Prostate gland (tissue), 2 donors: ENCODE measurements at regions of chr6 and their contacts with region 1.

Region 1: DNA sequence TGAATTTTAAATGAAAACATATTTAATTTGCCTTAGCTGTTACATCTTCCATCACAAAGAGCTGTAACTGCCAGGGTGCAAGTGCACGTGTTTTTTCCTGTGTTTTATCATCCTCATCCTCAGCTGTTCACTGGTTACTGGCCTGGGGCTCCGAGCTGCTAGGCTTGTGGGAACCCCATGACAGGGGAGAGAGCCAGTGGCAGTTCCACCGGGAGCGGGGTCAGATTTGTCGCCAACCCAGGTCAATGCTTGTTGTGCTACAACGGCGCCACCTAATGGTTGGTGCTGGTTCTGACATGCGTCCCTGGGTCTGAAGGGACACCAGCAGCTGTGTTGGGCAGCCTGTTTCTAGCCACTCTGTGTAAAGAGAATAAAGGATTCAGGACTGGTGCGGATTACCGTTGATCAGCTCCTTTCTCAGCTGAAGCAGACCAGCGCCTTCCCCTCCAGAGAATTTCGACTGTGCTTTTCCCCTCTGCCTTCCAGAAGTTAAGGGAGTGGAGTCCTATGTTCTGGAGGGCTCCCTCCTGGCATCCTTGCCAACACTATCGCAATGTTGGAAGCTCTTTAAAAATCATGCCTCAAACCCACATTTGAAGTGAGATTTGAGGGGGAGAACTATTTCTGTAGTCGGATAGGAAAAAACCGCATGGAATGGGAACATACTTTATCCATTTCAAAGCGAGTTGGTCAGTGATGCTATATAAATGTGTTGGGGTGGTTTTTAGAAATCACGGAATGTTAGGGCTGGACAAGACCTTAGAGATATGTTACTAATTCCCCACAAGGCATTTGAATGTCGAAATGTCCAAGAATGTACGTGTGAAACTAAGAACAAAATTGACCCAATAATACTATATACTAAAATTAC is 32.1 kb downstream of the SUMO4 start:
- DNase-seq: peak; percentile 87
- H3K4me3 ChIP-seq: no peak overlapping the region
- H3K27ac ChIP-seq: no peak overlapping the region
- H3K4me1 ChIP-seq: no peaks in the 10 kb centered on the region
- H3K27me3 ChIP-seq: no peaks in the 10 kb centered on the region
- CTCF ChIP-seq: peak; percentile 89 to 95 (median 94)
- POLR2A ChIP-seq: no peak

Region 2: GRCh38 chr6:149316798-149317655 is 115.1 kb before region 1 on chr6:
- intact Hi-C with region 1: loop called (anchors 5 kb)
- DNase-seq: peak; percentile 83
- H3K4me3 ChIP-seq: peak overlapping the region; percentile 93 to 95
- H3K27ac ChIP-seq: peak overlapping the region; percentile 97 to 98
- H3K4me1 ChIP-seq: peaks cover 4% of the 10 kb centered on the region
- H3K27me3 ChIP-seq: no peaks in the 10 kb centered on the region
- CTCF ChIP-seq: peak in 2 of 4 experiments; percentile 15 to 28
- POLR2A ChIP-seq: peak; percentile 72

Region 3: GRCh38 chr6:149368065-149368464 is 64.1 kb before region 1 on chr6:
- intact Hi-C with region 1: no loop called
- DNase-seq: no peak
- H3K4me3 ChIP-seq: no peak overlapping the region
- H3K27ac ChIP-seq: no peak overlapping the region
- H3K4me1 ChIP-seq: no peaks in the 10 kb centered on the region
- H3K27me3 ChIP-seq: no peaks in the 10 kb centered on the region
- CTCF ChIP-seq: no peak
- POLR2A ChIP-seq: no peak

Region 4: DNA sequence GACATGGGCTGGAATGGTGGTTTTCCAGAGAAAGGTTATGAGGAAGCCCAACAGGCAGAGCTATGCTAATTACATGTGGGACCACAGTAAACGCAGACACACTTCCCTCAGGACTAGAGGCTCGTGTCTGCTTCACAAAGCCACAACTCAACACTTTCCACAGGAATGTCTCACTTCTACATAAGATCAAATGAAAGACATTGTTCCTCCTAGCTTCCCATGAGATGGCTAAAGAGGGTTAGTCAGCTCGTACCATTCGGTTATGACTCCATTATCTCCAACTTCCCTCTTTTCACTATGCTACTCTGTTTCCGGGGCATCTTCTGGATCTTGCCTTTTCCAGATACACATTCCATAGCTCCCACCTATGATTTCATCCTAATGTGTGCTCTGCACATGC is 81.8 kb after region 1 on chr6:
- intact Hi-C with region 1: loop called (anchors 5 kb)
- DNase-seq: no peak
- H3K4me3 ChIP-seq: no peak overlapping the region
- H3K27ac ChIP-seq: no peak overlapping the region
- H3K4me1 ChIP-seq: no peaks in the 10 kb centered on the region
- H3K27me3 ChIP-seq: no peaks in the 10 kb centered on the region
- CTCF ChIP-seq: no peak
- POLR2A ChIP-seq: no peak